Right ventricle myocardium superior (tissue), 1 donor: ENCODE measurements at regions of chr10 and their contacts with region 1.

Region 1: DNA sequence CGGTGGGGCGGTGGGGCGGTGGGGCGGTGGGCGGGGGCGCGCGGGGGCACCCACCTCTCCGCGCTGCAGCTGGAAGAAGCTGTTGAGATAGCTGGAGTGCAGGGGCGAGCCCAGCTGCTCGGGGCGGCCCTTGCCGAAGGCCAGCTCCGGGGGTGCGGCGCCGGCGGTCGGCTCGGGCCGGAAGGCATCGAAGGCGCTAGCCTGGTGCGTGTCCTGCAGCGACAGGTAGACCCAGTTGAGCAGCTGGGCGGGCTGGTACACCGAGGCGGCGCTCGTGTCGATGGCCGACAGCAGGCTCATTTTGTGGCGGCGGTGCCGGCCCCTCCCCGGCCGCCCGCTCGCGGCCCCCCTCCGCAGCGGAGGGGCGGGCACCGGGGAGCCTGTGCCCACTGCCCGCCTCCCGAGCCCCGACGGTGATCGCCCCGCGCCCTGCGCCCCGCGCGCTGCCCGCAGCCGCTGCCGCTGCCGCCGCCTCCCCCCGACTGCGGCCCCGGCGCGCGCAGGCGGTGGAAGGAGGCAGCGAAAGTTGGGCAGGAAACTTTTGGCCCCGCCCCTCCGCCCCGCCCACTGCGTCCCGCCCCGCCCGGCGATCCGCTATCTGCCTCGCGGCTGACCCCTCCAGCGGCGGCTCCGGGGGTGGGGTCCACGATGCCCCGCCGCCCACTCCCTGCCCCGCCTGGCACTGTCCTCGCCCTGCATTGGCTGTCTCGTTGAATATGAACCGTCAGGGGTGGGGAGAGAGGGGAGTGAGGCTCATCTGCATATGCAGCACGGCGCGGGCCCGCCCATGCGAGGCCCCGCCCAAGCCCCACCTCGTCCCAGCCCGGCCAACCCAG is at the start of gene ZCCHC24:
- DNase-seq: peak; percentile 99
- ATAC-seq: peak; percentile 91
- total RNA-seq, gene ZCCHC24: 53.3 TPM

Region 2: DNA sequence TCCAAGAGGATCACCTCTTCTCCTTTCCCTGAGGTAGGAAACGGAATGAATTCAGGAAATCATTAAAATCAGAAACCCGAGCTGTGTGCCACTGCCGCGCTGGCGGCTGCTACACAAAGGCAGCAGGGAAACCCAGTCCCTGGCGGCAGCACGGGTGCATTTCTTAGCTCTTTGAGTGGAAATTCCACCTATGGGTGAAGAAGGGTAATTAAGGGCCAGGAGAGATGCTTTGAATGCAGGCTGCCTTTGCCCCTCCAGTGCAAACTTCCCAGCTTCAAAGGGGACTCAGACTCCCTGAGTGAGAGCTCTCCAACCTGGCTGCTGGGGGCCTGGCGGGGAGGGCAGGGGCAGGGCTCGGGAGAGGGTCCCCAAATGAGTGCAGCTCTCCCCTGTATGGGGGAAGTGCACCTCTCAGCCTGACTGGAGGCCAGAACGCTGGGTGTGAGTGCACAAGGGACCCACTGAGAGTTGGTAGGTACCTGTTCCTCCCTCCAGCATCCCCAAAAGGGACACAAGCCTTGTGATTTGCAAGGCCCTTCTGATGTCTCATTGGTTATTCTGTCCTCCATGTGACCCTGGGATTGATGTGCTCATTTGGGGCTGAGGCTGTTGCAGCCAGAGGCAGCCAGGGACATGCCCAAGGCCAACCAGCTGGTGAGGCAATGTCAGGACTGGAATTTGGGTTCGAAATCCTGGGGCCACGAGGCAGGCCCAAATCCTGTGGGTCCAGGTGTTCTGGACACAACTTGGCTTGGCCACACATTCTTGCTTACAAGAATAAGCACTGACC is 392.9 kb before region 1 on chr10:
- intact Hi-C with region 1: no loop called
- DNase-seq: no peak
- ATAC-seq: no peak

Region 3: GRCh38 chr10:79155301-79156081 is 289.9 kb before region 1 on chr10:
- intact Hi-C with region 1: no loop called
- DNase-seq: peak; percentile 76
- ATAC-seq: peak; percentile 4

Region 4: DNA sequence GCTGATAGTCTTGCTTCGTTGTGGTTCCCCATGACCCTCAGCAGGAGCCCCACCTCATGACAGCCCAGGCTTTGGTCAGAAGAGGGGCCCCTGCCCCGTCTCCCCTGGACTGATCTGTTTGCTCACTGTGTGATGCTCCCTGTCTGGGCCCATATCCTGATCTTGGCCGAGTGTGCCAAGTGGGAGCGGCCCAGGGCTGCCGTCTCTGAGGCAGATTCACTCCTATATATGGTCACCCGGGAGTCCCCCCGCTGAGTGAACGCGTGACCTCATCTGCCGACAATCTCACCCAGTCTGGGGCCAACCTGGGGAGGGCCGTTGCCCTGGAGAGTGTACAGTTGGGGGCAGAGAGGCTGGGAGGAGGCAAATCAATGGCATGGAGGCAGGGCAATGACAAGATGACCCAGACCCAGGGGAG is 63.5 kb before region 1 on chr10:
- intact Hi-C with region 1: loop called (anchors 10 kb)
- DNase-seq: peak; percentile 79
- ATAC-seq: peak; percentile 68